ENCODE measurements at regions of chr17 and their contacts with region 1.

Region 1: GRCh38 chr17:4733073-4733531 is 1.9 kb downstream of the MED11 start:
- DNase-seq: no peak
- H3K4me3 Mint-ChIP-seq: peak overlapping the region; percentile 38
- H3K27ac Mint-ChIP-seq: peak overlapping the region; percentile 65
- H3K4me1 Mint-ChIP-seq: peaks cover 57% of the 10 kb centered on the region
- H3K27me3 Mint-ChIP-seq: peaks cover 2% of the 10 kb centered on the region

Region 2: DNA sequence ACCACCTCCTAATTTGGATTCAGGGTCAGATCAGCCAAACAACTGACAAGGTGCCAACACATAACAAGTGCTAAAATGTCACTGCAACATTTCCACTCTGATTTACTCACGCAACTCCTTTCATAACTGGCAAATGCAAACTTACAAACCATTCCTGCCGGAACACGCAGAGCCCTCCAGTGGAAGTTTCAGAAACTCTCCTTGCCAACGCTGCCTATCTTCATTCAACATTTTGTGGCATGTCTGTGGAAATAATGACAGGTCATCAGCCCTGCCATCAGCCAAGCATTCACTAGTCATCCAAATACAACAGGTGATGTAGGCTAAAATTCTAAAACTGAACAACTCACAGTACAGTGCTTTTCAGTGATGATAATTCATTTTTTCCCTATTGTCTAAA is 1397.2 kb before region 1 on chr17:
- intact Hi-C with region 1: no loop called
- DNase-seq: no peak
- H3K4me3 Mint-ChIP-seq: no peak overlapping the region
- H3K27ac Mint-ChIP-seq: no peak overlapping the region
- H3K4me1 Mint-ChIP-seq: no peaks in the 10 kb centered on the region
- H3K27me3 Mint-ChIP-seq: peaks cover 4% of the 10 kb centered on the region

Region 3: DNA sequence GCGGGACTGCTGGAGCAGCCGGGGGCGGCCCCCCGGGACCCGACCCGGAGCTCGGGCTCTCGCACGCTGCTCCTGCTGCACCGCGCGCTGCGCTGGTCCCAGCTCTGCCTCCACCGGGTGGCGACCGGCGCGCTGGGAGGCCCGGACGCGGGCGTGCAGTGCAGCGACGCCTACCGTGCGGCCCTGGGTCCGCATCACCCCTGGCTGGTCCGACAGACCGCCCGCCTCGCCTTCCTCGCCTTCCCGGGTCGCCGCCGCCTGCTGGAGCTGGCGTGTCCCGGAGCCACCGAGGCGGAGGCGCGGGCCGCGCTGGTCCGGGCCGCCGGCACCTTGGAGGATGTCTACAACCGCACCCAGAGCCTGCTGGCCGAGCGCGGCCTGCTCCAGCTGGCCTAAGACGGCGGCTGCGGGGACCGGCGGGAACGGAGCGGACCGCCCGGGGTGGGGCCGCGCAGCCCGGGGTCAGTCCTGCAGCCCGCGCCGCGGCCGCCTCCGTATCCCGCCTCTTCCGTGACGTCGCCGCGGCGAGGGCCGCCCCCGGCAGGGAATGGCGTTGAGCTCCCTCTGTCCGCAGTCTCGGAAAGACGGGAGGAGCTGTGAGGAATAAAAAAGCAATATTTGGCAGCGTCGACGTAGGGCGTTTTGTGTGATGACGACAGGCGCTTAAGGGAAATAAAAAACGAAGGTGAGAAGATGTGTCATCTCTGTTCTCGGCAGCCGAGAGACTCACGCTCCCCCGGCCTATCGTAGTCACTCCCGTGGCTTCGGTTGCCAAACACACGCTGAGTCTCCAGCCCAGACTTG is 57.0 kb after region 1 on chr17:
- intact Hi-C with region 1: loop called (anchors 1 kb)
- DNase-seq: peak; percentile 82
- H3K4me3 Mint-ChIP-seq: peak overlapping the region; percentile 85
- H3K27ac Mint-ChIP-seq: peak overlapping the region; percentile 96
- H3K4me1 Mint-ChIP-seq: peaks cover 36% of the 10 kb centered on the region
- H3K27me3 Mint-ChIP-seq: peaks cover 45% of the 10 kb centered on the region

Region 4: DNA sequence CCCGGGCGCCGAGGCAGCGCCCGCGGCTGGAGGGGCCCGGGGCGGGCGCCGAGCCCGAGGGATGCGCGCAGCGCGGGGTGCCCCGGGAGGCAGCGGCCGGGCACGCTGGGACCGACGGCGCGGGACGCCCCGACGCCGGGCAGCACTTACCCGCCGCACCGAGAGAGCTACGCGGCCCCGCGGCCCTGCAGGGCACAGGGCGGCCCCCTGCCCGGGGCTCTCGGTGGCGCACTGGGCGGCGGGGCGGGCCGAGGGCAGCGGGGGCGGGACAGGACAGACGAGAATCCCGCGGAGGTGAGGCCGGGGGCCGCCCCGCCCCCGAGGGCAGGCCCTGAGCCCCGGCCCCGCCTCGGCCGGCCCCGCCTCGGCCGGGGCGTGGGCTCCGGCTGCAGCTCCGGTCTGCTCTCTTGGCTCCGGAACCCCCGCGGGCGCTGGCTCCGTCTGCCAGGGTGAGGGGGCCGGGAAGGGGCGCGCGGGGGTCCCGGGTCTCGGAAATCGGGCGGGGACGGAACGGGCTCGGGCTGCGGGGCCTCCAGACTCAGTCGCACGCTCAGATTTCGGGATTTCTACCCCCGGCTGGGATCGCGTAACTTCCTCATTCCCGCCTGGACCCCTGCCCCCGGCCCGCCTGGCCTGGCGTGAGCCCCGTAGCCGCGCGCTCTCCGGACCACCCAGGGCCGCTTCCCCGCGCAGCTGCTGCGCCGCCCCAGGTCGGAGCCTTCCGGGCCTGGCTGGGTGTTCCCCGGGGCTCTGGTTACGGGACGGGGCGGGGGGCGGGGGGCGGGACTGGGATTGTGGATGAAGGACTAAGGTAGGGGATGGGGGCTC is 73.9 kb after region 1 on chr17 and contains the start of gene PLD2:
- intact Hi-C with region 1: loop called (anchors 1 kb)
- DNase-seq: peak; percentile 89
- H3K4me3 Mint-ChIP-seq: peak within 1 kb of the TSS; percentile 82
- H3K27ac Mint-ChIP-seq: peak within 1 kb of the TSS; percentile 34
- H3K4me1 Mint-ChIP-seq: peaks cover 11% of the 10 kb centered on the region
- H3K27me3 Mint-ChIP-seq: peaks cover 2% of the 10 kb centered on the region
- total RNA-seq, gene PLD2: 16.7 and 22.2 TPM in 2 replicates

Region 5: GRCh38 chr17:4881761-4882555 is 148.9 kb after region 1 on chr17:
- intact Hi-C with region 1: loop called (anchors 1 kb)
- DNase-seq: peak; percentile 40
- H3K4me3 Mint-ChIP-seq: no peak overlapping the region
- H3K27ac Mint-ChIP-seq: no peak overlapping the region
- H3K4me1 Mint-ChIP-seq: peaks cover 5% of the 10 kb centered on the region
- H3K27me3 Mint-ChIP-seq: no peaks in the 10 kb centered on the region

Region 6: DNA sequence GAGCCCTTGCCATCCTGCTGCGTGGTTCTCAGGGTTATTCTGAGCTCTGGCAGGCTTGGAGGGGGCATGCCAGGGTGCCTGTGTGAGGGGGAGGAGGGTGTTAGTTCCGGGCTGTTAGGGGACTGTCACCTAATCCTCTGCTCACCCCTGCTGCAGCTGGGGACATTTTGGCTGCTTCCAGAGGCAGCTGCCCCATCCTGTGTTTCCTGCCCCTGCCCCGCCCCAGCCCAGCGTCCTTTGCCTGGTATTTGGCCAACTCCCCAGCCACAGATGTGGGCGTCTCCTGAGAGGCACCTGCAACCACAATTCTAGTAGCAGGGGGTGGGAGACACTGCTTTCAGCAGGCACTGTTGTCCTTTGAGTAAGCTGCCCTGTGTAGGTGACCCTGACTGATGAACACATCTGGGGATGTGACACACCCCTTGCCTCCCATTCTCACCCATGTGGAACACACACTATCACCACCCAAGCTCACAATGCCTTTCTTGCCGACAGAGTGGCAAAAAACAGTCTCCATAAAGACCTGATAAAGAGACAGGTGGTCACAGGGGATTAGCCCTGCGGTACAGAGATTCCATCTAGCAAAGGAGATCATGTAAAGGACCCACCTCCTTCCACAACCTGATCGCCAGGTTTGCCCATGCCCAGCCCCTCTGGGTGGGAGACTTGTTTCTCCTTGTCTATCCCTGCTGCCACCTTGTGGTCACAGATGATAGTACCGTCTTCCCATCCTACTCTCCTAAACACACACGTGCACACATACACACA is 170.1 kb after region 1 on chr17 and contains the start of gene CHRNE:
- intact Hi-C with region 1: loop called (anchors 1 kb)
- DNase-seq: peak; percentile 61
- H3K4me3 Mint-ChIP-seq: peak within 1 kb of the TSS; percentile 21
- H3K27ac Mint-ChIP-seq: peak within 1 kb of the TSS; percentile 52
- H3K4me1 Mint-ChIP-seq: peaks cover 25% of the 10 kb centered on the region
- H3K27me3 Mint-ChIP-seq: peaks cover 16% of the 10 kb centered on the region
- total RNA-seq, gene CHRNE: 0.52 and 0.61 TPM in 2 replicates